Gastrocnemius medialis (tissue), 4 donors: ENCODE measurements at regions of chr6 and their contacts with region 1.

Region 1: DNA sequence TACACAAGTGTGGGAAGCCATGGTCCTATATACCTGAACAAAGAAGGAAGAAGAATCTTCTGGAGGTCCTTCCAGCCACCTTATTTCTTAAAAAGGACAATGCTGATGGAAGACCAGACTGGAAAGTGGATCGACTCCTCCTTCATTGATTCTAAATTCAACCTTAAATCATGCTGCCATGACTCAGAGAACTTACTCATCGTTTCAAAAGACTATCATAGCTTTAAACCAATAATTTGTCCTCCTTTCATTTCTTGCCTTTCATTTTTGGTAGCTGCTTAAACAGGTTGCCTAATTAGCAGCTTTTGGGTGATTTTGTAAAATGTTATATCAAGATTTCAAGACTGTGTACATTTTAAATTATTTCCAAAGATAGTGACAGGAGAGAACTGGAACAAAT is 60.8 kb downstream of the RTN4IP1 start:
- DNase-seq: no peak
- ATAC-seq: no peak
- H3K4me3 ChIP-seq: no peak overlapping the region
- H3K27ac ChIP-seq: no peak overlapping the region
- H3K4me1 ChIP-seq: peaks cover 0 to 11% of the 10 kb centered on the region in 2 donors
- H3K27me3 ChIP-seq: no peaks in the 10 kb centered on the region
- CTCF ChIP-seq: no peak
- POLR2A ChIP-seq: no peak

Region 2: GRCh38 chr6:105431226-105431625 is 1137.3 kb before region 1 on chr6:
- in situ Hi-C with region 1: loop called in 3 of 4 experiments (anchors 25 kb)
- intact Hi-C with region 1: loop called (anchors 5 kb)
- DNase-seq: no peak
- ATAC-seq: no peak
- H3K4me3 ChIP-seq: no peak overlapping the region
- H3K27ac ChIP-seq: no peak overlapping the region
- H3K4me1 ChIP-seq: no peaks in the 10 kb centered on the region
- H3K27me3 ChIP-seq: no peaks in the 10 kb centered on the region
- CTCF ChIP-seq: peak in 4 of 5 experiments; percentile 10 to 47 (median 28)
- POLR2A ChIP-seq: no peak

Region 3: DNA sequence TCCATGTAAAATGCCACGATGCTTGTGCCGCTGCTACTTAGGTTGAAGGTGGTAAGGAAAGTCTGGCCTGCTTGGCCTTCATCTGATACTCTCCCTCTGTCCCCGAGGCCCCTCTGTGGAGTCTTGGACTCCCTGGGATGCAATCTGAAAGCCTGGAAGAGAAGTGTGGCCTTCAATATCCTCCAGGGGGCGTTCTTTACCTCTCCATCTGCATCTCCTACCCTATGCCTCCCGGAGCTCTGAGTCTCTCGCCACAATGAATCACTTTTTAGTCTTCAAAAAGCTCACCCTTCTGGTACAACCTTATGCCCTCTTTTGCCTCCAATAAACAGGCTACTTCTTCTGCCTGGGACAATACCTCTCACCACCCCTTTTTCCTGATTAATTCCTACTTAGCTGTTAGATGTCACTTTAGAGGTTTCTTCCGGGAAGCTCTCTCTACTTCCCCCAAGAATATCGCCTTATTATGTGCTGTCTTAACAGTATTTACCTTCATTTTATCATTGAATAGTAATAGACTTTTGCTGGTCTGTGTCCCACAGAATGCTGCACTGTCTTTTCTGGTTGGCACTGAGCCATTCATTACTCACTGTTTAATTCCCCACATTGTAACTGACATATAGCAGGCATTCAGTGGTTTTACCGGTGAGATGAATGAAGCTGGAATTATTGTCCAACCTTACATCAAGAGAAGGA is 229.0 kb before region 1 on chr6:
- in situ Hi-C with region 1: loop called (anchors 10 to 25 kb)
- intact Hi-C with region 1: loop called (anchors 5 kb)
- DNase-seq: peak in 1 of 2 donors; percentile 19
- ATAC-seq: peak; percentile 52 to 80
- H3K4me3 ChIP-seq: no peak overlapping the region
- H3K27ac ChIP-seq: no peak overlapping the region
- H3K4me1 ChIP-seq: no peaks in the 10 kb centered on the region
- H3K27me3 ChIP-seq: no peaks in the 10 kb centered on the region
- CTCF ChIP-seq: peak in 3 of 5 experiments; percentile 36 to 61 (median 41)
- POLR2A ChIP-seq: no peak

Region 4: GRCh38 chr6:106444777-106445507 is 123.6 kb before region 1 on chr6:
- in situ Hi-C with region 1: loop called (anchors 5 kb)
- intact Hi-C with region 1: loop called (anchors 1 kb)
- DNase-seq: peak in 1 of 2 donors; percentile 9
- ATAC-seq: peak; percentile 52 to 68
- H3K4me3 ChIP-seq: no peak overlapping the region
- H3K27ac ChIP-seq: no peak overlapping the region
- H3K4me1 ChIP-seq: no peaks in the 10 kb centered on the region
- H3K27me3 ChIP-seq: peaks cover 4 to 20% (median 7%) of the 10 kb centered on the region in 3 donors
- CTCF ChIP-seq: peak; percentile 46 to 74 (median 61)
- POLR2A ChIP-seq: no peak

Region 5: DNA sequence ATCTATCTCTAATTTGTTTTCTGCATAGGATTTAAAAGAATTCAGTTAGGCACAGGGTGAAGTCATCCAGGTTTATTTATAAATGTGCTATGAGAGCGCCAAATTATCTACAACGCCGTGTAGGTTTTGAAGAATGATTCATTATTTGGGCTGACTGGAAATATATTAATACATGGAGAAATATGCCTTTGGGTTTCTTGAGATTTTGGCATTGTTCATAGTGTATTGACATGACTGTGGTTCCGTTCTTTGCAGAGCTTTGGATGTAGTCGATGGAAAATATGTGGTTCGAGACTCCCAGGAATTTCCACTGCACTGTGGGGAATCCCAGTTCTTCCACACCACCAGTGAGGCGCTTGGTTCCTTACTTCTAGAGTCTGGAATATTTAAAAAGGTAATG is 117.1 kb before region 1 on chr6:
- in situ Hi-C with region 1: loop called in 2 of 4 experiments (anchors 5 kb)
- intact Hi-C with region 1: no loop called
- DNase-seq: no peak
- ATAC-seq: no peak
- H3K4me3 ChIP-seq: no peak overlapping the region
- H3K27ac ChIP-seq: no peak overlapping the region
- H3K4me1 ChIP-seq: no peaks in the 10 kb centered on the region
- H3K27me3 ChIP-seq: no peaks in the 10 kb centered on the region
- CTCF ChIP-seq: no peak
- POLR2A ChIP-seq: no peak